ENCODE measurements at regions of chr19 and their contacts with region 1.

Region 1: DNA sequence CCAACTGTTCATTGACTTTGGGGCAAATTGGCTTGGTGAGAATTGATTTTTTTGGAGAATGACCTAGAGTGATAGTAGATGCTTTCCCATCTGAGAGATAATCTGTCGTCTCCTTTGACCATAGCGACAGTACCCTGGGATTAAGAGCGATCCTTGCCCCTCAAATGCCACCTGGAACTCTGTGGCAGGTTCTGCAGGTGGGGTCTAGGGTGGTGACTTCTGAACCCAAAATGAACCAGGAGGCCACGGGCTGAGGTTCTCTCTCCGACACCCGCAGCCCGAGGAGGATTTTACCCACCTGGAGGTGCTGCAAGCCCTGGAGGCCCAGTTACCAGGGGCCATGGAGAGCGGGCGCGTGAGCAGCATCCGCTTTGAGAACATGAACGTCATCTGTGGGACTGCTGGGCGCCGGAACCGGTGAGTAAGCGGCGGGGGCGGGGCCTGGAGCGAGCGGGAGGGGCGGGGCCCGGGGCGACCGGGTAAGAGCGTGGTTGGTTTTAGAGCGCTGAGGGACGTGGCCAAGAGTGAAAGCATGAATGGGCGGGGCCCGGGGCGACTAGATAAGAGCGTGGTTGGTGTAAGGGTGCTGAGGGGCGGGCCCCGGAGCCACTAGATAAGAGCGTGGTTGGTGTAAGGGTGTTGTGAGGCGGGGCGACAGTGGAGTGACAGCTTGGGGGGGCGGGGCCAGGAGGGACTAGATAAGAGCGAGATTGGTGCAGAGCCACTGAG is 8.6 kb downstream of the C19orf81 start:
- DNase-seq: peak; percentile 95

Region 2: DNA sequence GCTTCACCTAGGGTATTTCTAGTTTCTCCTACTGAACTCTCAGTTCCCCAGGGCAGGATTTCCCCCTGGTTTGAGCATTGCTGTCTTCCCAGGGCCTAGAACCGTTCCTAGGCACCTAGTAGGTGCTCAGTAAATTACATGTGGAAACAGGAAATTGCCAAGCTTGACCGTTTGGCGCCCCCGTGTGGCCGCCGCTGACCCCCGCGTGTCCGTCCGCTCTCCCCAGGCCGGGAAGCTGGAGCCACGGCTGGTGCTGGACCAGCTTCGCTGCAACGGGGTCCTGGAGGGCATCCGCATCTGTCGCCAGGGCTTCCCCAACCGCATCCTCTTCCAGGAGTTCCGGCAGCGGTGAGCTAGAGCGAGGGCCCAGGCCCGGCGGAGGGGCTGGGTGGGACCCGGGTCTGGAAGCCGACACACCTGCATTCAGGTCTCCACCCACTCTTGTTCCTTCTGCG is 398.9 kb before region 1 on chr19:
- intact Hi-C with region 1: loop called in 1 of 2 experiments (anchors 5 kb)
- DNase-seq: no peak

Measured in posterior vena cava (tissue), 2 donors.